Activated CD8-positive, alpha-beta memory T cell treated with anti-CD3 and anti-CD28 coated beads, Interleukin-2, amount 10 ng/mL, durations not matched to agents 7 days and 5 days (primary cell): ENCODE measurements at regions of chr14 and their contacts with region 1.

Region 1: GRCh38 chr14:24093901-24094761 is at the start of gene PCK2:
- DNase-seq: peak; percentile 89
- ATAC-seq: peak; percentile 74
- H3K4me3 Mint-ChIP-seq: peak within 1 kb of the TSS; percentile 99
- H3K27ac Mint-ChIP-seq: peak within 1 kb of the TSS; percentile 99
- H3K4me1 Mint-ChIP-seq: peaks cover 33% of the 10 kb centered on the region
- H3K27me3 Mint-ChIP-seq: no peaks in the 10 kb centered on the region
- total RNA-seq, gene PCK2: 61.7 to 87.0 TPM

Region 2: GRCh38 chr14:24058260-24058950 is 35.7 kb before region 1 on chr14:
- CTCF ChIA-PET with region 1: interaction called, 139 read pairs
- DNase-seq: peak; percentile 69
- ATAC-seq: peak; percentile 74
- H3K4me3 Mint-ChIP-seq: no peak overlapping the region
- H3K27ac Mint-ChIP-seq: no peak overlapping the region
- H3K4me1 Mint-ChIP-seq: peaks cover under 1% of the 10 kb centered on the region
- H3K27me3 Mint-ChIP-seq: peaks cover 11% of the 10 kb centered on the region

Region 3: DNA sequence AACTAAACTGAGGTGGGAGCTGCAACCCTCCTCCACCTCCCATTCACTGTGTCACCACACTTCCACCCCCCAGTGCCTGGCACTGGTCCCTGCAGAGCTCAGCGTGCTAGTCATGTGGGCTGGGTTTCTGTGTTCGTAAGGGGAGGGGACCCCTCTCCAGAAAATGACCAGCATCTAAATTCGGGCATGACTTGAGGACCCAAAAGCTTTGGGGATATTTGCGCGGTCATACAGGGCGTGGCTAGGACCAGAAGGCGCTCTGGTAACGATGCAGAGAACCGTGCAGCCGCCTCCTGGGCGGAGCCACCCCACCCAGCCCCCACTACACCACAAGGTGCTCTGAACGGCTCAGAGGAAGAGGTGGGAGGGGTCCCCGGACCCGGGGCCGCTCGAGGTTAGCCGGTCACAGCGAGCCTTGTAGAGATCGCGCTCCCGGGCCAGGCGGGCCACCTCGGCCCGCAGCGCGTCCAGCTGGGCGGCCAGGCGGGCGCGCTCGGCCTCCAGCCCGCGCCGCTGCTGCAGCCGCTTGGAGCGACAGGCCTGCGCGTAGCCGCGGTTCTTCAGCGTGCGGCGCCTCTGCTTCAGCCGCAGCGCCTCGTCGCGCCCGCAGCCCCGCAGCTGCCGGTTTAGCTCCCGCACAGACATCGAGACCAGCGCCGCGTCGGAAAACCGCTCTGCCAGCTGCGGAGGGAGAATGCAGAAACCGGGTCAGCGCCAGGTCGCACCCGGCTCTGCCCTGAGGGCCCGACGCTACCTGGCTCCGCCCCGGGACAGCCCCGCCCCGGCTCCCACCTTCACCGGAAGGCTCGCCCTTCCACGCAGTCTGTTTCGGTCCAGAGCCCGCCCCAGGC is 13.0 kb before region 1 on chr14:
- CTCF ChIA-PET with region 1: interaction called, 78 read pairs
- DNase-seq: peak; percentile 90
- ATAC-seq: peak; percentile 93
- H3K4me3 Mint-ChIP-seq: peak overlapping the region; percentile 75
- H3K27ac Mint-ChIP-seq: peak overlapping the region; percentile 81
- H3K4me1 Mint-ChIP-seq: peaks cover 17% of the 10 kb centered on the region
- H3K27me3 Mint-ChIP-seq: no peaks in the 10 kb centered on the region

Region 4: GRCh38 chr14:24114536-24115450 is 20.7 kb after region 1 on chr14 and contains the starts of genes DCAF11 and NRL:
- CTCF ChIA-PET with region 1: interaction called, 225 read pairs
- DNase-seq: peak; percentile 100
- ATAC-seq: peak; percentile 91
- H3K4me3 Mint-ChIP-seq: peak within 1 kb of the TSS; percentile 99
- H3K27ac Mint-ChIP-seq: peak within 1 kb of the TSS; percentile 100
- H3K4me1 Mint-ChIP-seq: peaks cover 30% of the 10 kb centered on the region
- H3K27me3 Mint-ChIP-seq: no peaks in the 10 kb centered on the region
- total RNA-seq, gene DCAF11: 86.3 to 94.4 TPM
- total RNA-seq, gene NRL: 2.6 to 3.2 TPM

Region 5: DNA sequence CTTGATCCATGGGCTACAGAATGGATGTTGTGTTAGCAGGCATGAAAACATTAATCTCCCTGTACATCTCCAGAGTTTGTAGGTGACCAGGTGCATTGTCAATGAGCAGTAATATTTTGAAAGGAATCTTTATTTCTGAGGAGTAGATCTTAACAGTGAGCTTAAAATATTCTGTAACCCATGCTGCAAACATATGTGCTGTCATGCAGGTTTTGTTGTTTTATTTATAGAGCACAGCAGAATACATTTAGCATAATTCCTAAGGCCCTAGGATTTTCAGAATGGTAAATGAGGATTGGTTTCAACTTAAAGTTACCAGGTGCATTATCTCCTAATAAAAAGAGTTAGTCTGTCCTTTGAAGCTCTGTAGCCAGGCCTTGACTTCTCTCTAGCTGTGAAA is 32.8 kb after region 1 on chr14:
- CTCF ChIA-PET with region 1: no interaction called
- DNase-seq: no peak
- ATAC-seq: no peak
- H3K4me3 Mint-ChIP-seq: no peak overlapping the region
- H3K27ac Mint-ChIP-seq: no peak overlapping the region
- H3K4me1 Mint-ChIP-seq: peaks cover 5% of the 10 kb centered on the region
- H3K27me3 Mint-ChIP-seq: no peaks in the 10 kb centered on the region

Region 6: DNA sequence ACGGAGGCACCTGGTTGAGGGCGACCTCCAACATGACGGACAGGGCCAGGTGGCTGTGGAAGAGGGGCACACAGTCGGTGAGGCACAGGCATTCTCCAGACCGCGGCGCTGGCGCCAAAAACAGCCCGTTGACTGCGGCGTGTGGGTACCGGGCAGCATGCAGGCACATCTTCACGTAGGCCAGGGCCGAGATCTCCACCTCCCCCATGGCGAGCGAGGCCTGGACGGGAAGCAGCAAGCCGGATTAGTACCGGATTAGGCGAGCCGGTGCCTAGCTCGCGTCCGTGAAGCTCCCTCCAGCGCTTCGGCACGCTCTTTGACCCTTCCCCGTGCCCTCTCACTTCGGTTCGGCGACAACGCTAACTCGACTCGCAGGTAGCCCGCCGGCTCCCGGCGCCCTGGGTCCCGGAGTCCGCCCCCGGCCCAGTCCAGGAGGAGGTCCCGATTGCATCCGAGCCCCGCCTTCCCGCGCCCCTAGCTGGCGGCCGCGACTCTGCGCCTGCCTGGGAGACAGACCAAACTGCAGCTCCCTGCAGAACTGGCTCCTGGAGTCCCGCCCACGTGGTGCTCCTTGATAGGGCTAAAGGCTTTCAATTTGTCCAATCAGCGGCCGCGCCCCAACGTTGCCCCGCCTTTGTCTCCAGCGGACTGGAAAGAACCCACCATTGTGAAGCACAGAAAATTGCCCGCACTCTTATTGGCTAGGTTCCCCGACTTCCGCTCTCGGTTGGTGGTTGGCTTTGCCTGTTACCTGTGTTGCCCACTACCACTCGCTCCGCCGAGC is 47.2 kb after region 1 on chr14 and contains the start of gene EMC9:
- CTCF ChIA-PET with region 1: interaction called, 10 read pairs
- DNase-seq: peak; percentile 100
- ATAC-seq: peak; percentile 91
- H3K4me3 Mint-ChIP-seq: peak within 1 kb of the TSS; percentile 98
- H3K27ac Mint-ChIP-seq: peak within 1 kb of the TSS; percentile 91
- H3K4me1 Mint-ChIP-seq: peaks cover 74% of the 10 kb centered on the region
- H3K27me3 Mint-ChIP-seq: no peaks in the 10 kb centered on the region
- total RNA-seq, gene EMC9: 45.5 to 56.1 TPM

Region 7: DNA sequence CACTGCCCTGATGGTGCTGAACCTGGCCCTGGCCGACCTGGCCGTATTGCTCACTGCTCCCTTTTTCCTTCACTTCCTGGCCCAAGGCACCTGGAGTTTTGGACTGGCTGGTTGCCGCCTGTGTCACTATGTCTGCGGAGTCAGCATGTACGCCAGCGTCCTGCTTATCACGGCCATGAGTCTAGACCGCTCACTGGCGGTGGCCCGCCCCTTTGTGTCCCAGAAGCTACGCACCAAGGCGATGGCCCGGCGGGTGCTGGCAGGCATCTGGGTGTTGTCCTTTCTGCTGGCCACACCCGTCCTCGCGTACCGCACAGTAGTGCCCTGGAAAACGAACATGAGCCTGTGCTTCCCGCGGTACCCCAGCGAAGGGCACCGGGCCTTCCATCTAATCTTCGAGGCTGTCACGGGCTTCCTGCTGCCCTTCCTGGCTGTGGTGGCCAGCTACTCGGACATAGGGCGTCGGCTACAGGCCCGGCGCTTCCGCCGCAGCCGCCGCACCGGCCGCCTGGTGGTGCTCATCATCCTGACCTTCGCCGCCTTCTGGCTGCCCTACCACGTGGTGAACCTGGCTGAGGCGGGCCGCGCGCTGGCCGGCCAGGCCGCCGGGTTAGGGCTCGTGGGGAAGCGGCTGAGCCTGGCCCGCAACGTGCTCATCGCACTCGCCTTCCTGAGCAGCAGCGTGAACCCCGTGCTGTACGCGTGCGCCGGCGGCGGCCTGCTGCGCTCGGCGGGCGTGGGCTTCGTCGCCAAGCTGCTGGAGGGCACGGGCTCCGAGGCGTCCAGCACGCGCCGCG is 221.9 kb after region 1 on chr14:
- CTCF ChIA-PET with region 1: no interaction called
- DNase-seq: no peak
- ATAC-seq: no peak
- H3K4me3 Mint-ChIP-seq: no peak overlapping the region
- H3K27ac Mint-ChIP-seq: no peak overlapping the region
- H3K4me1 Mint-ChIP-seq: peaks cover 52% of the 10 kb centered on the region
- H3K27me3 Mint-ChIP-seq: peaks cover 12% of the 10 kb centered on the region